ENCODE measurements at regions of chr3 and their contacts with region 1.

Region 1: GRCh38 chr3:107404727-107405469 is 27.7 kb downstream of the CCDC54 start:
- DNase-seq: no peak
- CTCF ChIP-seq: no peak

Region 2: GRCh38 chr3:107421170-107421792 is 16.4 kb after region 1 on chr3:
- CTCF ChIA-PET with region 1: interaction called, 21 read pairs
- POLR2A ChIA-PET with region 1: no interaction called
- DNase-seq: peak; percentile 33
- CTCF ChIP-seq: peak; percentile 69

Region 3: GRCh38 chr3:107429320-107430181 is 24.7 kb after region 1 on chr3:
- CTCF ChIA-PET with region 1: interaction called, 13 read pairs
- POLR2A ChIA-PET with region 1: no interaction called
- DNase-seq: peak; percentile 80
- CTCF ChIP-seq: peak; percentile 80

Measured in GM10248 (cell line).